ENCODE measurements at regions of chr17 and their contacts with region 1.

Region 1: GRCh38 chr17:76219670-76220383 is 20.5 kb downstream of the RNF157 start:
- DNase-seq: no peak
- H3K4me3 ChIP-seq: no peak overlapping the region
- H3K27ac ChIP-seq: no peak overlapping the region
- H3K4me1 ChIP-seq: no peaks in the 10 kb centered on the region
- H3K27me3 ChIP-seq: no peaks in the 10 kb centered on the region
- CTCF ChIP-seq: no peak

Region 2: GRCh38 chr17:75864448-75864871 is 355.4 kb before region 1 on chr17:
- CTCF ChIA-PET with region 1: interaction called, 16 read pairs
- POLR2A ChIA-PET with region 1: no interaction called
- intact Hi-C with region 1: no loop called
- DNase-seq: no peak
- H3K4me3 ChIP-seq: no peak overlapping the region
- H3K27ac ChIP-seq: no peak overlapping the region
- H3K4me1 ChIP-seq: peaks cover 2% of the 10 kb centered on the region; the same call in 1 of the 2 replicates
- H3K27me3 ChIP-seq: no peaks in the 10 kb centered on the region
- CTCF ChIP-seq: no peak

Region 3: GRCh38 chr17:76166168-76166567 is 53.7 kb before region 1 on chr17:
- CTCF ChIA-PET with region 1: no interaction called
- POLR2A ChIA-PET with region 1: no interaction called
- intact Hi-C with region 1: no loop called
- DNase-seq: no peak
- H3K4me3 ChIP-seq: no peak overlapping the region
- H3K27ac ChIP-seq: no peak overlapping the region
- H3K4me1 ChIP-seq: no peaks in the 10 kb centered on the region
- H3K27me3 ChIP-seq: no peaks in the 10 kb centered on the region
- CTCF ChIP-seq: no peak

Region 4: GRCh38 chr17:76182016-76182764 is 37.6 kb before region 1 on chr17:
- CTCF ChIA-PET with region 1: no interaction called
- POLR2A ChIA-PET with region 1: no interaction called
- intact Hi-C with region 1: no loop called
- DNase-seq: peak; percentile 67 to 85
- H3K4me3 ChIP-seq: no peak overlapping the region
- H3K27ac ChIP-seq: no peak overlapping the region
- H3K4me1 ChIP-seq: 0 out of 2 replicates have a peak, but pooled peaks cover 5% of the 10 kb centered on the region
- H3K27me3 ChIP-seq: no peaks in the 10 kb centered on the region
- CTCF ChIP-seq: peak; percentile 83

Region 5: DNA sequence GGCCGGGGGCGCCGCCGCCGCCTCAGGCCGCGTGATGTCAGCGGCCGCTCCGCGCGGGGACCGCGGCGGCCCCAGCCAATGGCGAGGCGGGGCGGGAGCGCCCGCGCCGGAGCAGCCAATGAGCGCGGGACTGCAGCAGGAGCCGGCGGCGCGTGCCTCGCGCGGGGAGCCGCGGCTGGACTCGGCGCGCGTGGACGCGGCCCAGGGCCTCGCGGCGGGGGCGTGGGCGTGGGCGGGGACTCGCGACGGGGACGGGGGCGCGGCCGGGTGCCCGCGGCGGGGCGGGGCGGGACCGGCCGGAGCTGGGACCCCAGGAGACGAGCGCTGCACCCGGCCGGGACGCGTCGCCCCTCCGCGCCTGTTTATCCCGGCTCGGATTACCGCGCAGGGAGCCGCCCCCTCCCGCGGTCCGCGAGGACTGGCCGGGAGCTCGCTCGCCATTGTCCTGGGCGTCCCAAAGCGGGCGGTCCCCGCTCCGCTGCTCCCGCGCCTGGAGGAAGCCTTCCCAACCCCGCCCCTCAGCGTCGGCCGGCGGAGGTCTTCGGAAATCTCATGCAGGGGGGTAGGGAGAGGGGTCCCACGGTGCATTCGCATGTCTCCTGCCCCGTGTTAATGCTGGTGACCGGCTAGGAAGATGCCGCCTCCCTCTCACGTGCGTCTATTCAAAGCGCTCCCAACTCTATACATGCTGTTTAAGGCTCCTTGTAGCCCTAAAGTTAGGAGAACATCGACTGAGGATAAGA is 20.8 kb after region 1 on chr17 and contains the start of gene RNF157:
- CTCF ChIA-PET with region 1: no interaction called
- POLR2A ChIA-PET with region 1: interaction called, 10 read pairs
- intact Hi-C with region 1: no loop called
- DNase-seq: peak in 1 of 2 experiments; percentile 65
- H3K4me3 ChIP-seq: peak within 1 kb of the TSS; percentile 85
- H3K27ac ChIP-seq: no peak within 1 kb of the TSS
- H3K4me1 ChIP-seq: peaks cover 12% of the 10 kb centered on the region
- H3K27me3 ChIP-seq: no peaks in the 10 kb centered on the region
- CTCF ChIP-seq: no peak
- total RNA-seq, gene RNF157: 5.7 and 7.2 TPM in 2 replicates

Region 6: DNA sequence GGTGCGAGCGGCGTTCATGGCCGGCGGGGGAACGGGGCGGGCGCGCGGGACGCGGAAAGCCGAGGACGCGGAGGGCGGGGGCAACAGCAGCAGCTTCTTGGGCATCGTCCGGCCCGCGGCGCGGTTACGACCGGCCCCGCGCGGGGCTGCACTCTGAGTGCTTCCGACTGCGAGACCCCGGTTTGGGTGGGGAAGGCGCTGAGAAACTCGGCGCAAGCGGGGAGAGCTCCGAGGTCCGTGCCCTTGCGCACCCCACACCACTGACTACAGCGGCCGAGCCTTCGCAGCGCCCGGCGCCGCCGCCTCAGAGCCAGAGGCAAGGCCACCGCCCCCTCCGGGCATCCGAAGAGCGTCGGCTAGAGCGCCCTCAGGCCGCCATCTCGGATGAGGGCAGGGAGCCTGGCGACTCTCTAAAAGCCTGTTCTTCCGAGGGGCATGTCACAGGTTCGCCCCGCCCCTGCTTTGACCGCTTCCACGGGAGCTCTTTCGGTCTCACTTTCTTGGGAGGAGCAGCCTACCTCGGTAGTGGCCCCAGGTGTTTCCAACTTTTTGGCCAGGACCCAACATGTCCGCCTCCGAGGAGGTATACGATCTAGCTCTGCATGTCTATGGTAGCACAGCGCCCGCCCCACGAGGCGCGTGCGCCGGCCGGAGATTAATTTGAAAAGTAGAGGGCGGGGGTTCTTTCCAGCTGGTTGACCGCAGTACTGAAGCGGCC is 133.9 kb after region 1 on chr17 and contains the start of gene PRPSAP1:
- CTCF ChIA-PET with region 1: interaction called, 15 read pairs
- POLR2A ChIA-PET with region 1: no interaction called
- intact Hi-C with region 1: no loop called
- DNase-seq: peak; percentile 79 to 88
- H3K4me3 ChIP-seq: peak within 1 kb of the TSS; percentile 73
- H3K27ac ChIP-seq: peak within 1 kb of the TSS; percentile 75
- H3K4me1 ChIP-seq: no peaks in the 10 kb centered on the region
- H3K27me3 ChIP-seq: no peaks in the 10 kb centered on the region
- CTCF ChIP-seq: peak; percentile 49; the same call in 1 of the 2 replicates
- total RNA-seq, gene PRPSAP1: 63.3 and 73.0 TPM in 2 replicates